GM13977 (cell line): ENCODE measurements at regions of chr2 and their contacts with region 1.

Region 1: DNA sequence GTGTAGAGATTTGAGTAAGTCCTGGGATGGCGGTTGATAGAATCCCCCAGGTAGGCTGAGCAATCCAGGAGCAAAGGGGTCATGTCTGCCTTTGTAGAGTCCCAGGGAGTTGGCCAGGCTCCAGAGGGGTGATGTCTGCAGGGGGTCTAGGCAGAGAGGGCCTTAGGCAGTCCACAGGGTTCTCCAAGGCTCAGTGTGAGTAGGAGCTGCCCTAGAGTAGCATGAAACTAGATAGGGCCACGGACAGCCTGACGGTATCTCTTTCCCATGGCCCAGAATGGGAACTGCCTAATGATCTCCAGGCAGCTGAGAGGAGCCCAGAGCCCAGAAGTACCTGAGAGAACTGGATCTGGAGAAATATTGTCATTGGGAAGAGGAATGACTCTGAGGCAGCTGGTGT is 9.0 kb upstream of the FAM136A start:
- DNase-seq: no peak
- CTCF ChIP-seq: no peak

Region 2: GRCh38 chr2:70203086-70203485 is 107.8 kb before region 1 on chr2:
- in situ Hi-C with region 1: no loop called
- DNase-seq: no peak
- CTCF ChIP-seq: no peak

Region 3: DNA sequence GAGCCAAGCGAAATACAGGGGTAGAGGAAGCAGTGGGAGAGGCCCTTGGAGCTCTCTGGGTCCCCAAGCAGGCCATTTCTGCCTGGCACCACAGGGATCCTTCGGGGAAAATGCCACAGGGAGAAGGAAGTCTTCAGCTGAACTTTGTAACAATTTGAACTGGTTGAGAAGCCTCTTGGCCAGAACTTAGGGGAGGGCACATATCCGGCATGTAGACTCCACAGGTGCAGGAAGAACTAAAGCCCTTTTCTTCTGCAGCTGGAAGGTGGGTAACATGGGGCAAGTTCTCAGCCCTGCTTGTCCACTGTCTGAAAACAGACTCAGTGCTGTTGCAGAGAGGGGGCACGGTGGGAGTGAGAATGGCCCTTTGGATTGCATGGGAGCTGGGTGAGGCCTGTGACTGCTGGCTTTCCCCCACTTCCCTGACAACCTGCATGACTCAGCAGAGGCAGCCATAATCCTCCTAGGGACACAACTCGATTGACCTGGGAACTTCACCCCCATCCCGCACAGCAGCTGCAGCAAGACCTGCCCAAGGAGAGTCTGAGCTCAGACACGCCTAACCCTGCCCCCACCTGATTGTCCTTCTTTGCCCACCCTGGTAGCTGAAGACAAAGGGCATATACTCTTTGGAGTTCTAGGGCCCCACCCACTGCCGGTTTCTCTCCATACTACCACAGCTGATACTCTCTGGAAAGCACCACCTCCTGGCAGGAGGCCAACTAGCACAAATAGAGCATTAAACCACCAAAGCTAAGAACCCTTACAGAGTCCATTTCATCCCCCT is 92.6 kb after region 1 on chr2:
- in situ Hi-C with region 1: no loop called
- DNase-seq: no peak
- CTCF ChIP-seq: no peak

Region 4: GRCh38 chr2:70616168-70616694 is 305.3 kb after region 1 on chr2:
- in situ Hi-C with region 1: loop called (anchors 10 kb)
- DNase-seq: no peak
- CTCF ChIP-seq: no peak